CD8-positive, alpha-beta T cell (primary cell): ENCODE measurements at regions of chr11 and their contacts with region 1.

Region 1: GRCh38 chr11:2400069-2400760 is at the start of gene TSSC4:
- DNase-seq: peak; percentile 99 to 100 (median 99)
- ATAC-seq: peak; percentile 87
- H3K4me3 ChIP-seq: peak within 1 kb of the TSS; percentile 94 to 96
- H3K4me3 Mint-ChIP-seq: peak within 1 kb of the TSS; percentile 92
- H3K27ac ChIP-seq: peak within 1 kb of the TSS; percentile 96 to 99
- H3K27ac Mint-ChIP-seq: peak within 1 kb of the TSS; percentile 94
- H3K4me1 ChIP-seq: peaks cover 24% of the 10 kb centered on the region
- H3K4me1 Mint-ChIP-seq: peaks cover 19% of the 10 kb centered on the region
- H3K27me3 ChIP-seq: no peaks in the 10 kb centered on the region
- H3K27me3 Mint-ChIP-seq: no peaks in the 10 kb centered on the region
- CTCF ChIP-seq: peak; percentile 85
- total RNA-seq, gene TSSC4: 48.8 to 49.5 TPM

Region 2: DNA sequence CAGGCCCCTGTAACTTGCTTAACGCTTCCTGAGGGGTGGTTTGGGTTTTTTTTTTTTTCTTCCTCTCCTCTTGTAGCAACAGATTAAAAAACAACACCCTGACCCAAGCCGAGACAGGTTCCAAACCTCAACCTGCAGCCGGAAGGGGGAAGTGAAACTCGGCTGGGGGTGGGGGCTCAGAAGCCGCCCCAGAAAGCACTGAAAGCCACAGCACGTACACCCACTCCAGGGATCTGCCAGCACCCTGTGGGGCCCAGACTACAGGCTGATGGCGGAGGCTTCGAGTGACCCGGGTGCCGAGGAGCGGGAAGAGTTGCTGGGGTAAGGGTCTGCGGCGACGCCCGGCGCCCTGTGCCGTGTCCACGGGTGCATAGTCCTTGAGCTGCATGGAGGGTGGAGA is 547.3 kb before region 1 on chr11 and contains the start of gene LSP1:
- CTCF ChIA-PET with region 1: no interaction called
- POLR2A ChIA-PET with region 1: no interaction called
- intact Hi-C with region 1: loop called in 1 of 2 experiments (anchors 10 kb)
- DNase-seq: peak; percentile 64 to 96 (median 86)
- ATAC-seq: peak; percentile 65
- H3K4me3 ChIP-seq: peak within 1 kb of the TSS; percentile 81 to 100
- H3K4me3 Mint-ChIP-seq: peak within 1 kb of the TSS; percentile 94
- H3K27ac ChIP-seq: peak within 1 kb of the TSS; percentile 90 to 91
- H3K27ac Mint-ChIP-seq: peak within 1 kb of the TSS; percentile 92
- H3K4me1 ChIP-seq: peaks cover 81% of the 10 kb centered on the region
- H3K4me1 Mint-ChIP-seq: peaks cover 67% of the 10 kb centered on the region
- H3K27me3 ChIP-seq: no peaks in the 10 kb centered on the region
- H3K27me3 Mint-ChIP-seq: no peaks in the 10 kb centered on the region
- CTCF ChIP-seq: no peak
- total RNA-seq, gene LSP1: 190 to 191 TPM

Region 3: DNA sequence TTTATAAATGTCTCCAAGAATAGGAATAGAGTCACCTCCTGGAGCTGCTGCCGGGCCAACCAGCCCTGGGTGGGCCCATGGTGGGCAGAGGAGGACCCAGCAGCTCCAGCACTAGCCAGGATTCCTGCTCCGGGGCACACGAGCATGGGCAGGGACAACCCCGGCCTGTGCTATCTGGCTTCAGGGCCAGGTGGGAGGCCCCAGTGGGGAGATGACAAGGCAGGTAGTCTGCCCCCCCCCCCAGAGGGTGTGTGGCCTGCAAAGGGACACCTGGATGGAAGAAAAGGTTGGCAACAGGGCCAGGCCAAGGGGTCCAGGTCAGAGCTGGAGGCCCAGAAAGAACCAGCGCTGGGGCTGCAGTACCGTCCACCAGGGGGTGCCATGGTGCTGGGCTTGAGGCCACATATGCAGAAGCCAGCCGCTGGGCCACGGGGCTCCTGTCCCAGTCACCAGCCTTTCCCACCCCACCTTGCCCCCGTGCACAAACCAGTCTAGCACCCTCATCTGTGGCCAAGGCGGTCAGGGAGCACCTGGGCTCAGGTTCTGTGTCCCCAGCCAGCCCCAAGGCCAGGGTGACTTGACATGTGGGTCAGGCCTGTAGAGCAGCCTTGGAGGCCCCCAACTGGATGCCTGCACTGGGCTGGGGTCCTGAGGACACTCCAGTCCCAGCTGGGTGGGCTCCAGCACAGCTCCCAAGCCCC is 94.9 kb before region 1 on chr11:
- CTCF ChIA-PET with region 1: interaction called, 20 read pairs
- POLR2A ChIA-PET with region 1: interaction called, 23 read pairs
- intact Hi-C with region 1: loop called (anchors 1 kb)
- DNase-seq: peak; percentile 67 to 93 (median 86)
- ATAC-seq: peak; percentile 52
- H3K4me3 ChIP-seq: peak overlapping the region; percentile 82 to 83
- H3K4me3 Mint-ChIP-seq: peak overlapping the region; percentile 91
- H3K27ac ChIP-seq: peak overlapping the region; percentile 48 to 61
- H3K27ac Mint-ChIP-seq: peak overlapping the region; percentile 86
- H3K4me1 ChIP-seq: peaks cover 56% of the 10 kb centered on the region
- H3K4me1 Mint-ChIP-seq: peaks cover 51% of the 10 kb centered on the region
- H3K27me3 ChIP-seq: no peaks in the 10 kb centered on the region
- H3K27me3 Mint-ChIP-seq: no peaks in the 10 kb centered on the region
- CTCF ChIP-seq: peak; percentile 78

Region 4: DNA sequence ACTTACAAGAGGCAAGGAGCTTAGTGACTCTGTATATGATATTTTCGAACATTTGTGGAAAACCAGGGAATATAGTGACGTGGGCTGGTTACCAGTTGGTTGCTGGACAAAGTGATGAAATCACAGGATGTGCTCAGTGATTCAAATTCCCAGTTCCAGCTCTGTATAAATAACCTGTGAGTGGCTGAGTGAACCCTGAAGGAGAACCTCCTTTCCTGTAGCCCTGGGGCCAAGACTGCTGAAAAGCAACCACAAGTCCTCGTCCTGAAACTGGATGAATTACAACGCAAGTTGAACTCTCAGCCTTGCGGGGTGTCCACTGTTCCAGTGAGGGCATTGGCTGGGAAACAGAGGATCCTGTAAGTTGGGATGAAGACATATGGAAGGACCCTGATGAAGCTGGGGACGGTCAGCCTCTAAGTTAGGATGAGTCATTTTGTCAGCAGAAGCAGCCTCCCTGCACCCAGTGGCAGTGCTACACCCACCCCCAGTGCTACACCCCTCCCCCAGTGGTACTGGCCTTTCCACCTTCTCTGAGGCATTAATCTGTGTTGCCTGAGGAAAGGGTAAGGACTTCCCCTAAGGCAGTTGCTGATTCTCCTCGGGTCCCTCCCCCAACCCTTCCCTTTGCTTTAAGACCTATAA is 45.1 kb before region 1 on chr11:
- CTCF ChIA-PET with region 1: no interaction called
- POLR2A ChIA-PET with region 1: no interaction called
- intact Hi-C with region 1: no loop called
- DNase-seq: no peak
- ATAC-seq: no peak
- H3K4me3 ChIP-seq: no peak overlapping the region
- H3K4me3 Mint-ChIP-seq: no peak overlapping the region
- H3K27ac ChIP-seq: no peak overlapping the region
- H3K27ac Mint-ChIP-seq: no peak overlapping the region
- H3K4me1 ChIP-seq: no peaks in the 10 kb centered on the region
- H3K4me1 Mint-ChIP-seq: no peaks in the 10 kb centered on the region
- H3K27me3 ChIP-seq: no peaks in the 10 kb centered on the region
- H3K27me3 Mint-ChIP-seq: peaks cover 2% of the 10 kb centered on the region
- CTCF ChIP-seq: no peak

Region 5: GRCh38 chr11:2387266-2387987 is 12.8 kb before region 1 on chr11:
- CTCF ChIA-PET with region 1: interaction called, 5 read pairs
- POLR2A ChIA-PET with region 1: interaction called, 24 read pairs
- intact Hi-C with region 1: no loop called
- DNase-seq: peak in 6 of 9 experiments; percentile 32 to 85 (median 59)
- ATAC-seq: peak; percentile 56
- H3K4me3 ChIP-seq: peak overlapping the region in 1 of 2 experiments; percentile 31
- H3K4me3 Mint-ChIP-seq: peak overlapping the region; percentile 18
- H3K27ac ChIP-seq: peak overlapping the region in 1 of 2 experiments; percentile 72
- H3K27ac Mint-ChIP-seq: peak overlapping the region; percentile 55
- H3K4me1 ChIP-seq: peaks cover 61% of the 10 kb centered on the region
- H3K4me1 Mint-ChIP-seq: peaks cover 60% of the 10 kb centered on the region
- H3K27me3 ChIP-seq: no peaks in the 10 kb centered on the region
- H3K27me3 Mint-ChIP-seq: no peaks in the 10 kb centered on the region
- CTCF ChIP-seq: no peak

Region 6: DNA sequence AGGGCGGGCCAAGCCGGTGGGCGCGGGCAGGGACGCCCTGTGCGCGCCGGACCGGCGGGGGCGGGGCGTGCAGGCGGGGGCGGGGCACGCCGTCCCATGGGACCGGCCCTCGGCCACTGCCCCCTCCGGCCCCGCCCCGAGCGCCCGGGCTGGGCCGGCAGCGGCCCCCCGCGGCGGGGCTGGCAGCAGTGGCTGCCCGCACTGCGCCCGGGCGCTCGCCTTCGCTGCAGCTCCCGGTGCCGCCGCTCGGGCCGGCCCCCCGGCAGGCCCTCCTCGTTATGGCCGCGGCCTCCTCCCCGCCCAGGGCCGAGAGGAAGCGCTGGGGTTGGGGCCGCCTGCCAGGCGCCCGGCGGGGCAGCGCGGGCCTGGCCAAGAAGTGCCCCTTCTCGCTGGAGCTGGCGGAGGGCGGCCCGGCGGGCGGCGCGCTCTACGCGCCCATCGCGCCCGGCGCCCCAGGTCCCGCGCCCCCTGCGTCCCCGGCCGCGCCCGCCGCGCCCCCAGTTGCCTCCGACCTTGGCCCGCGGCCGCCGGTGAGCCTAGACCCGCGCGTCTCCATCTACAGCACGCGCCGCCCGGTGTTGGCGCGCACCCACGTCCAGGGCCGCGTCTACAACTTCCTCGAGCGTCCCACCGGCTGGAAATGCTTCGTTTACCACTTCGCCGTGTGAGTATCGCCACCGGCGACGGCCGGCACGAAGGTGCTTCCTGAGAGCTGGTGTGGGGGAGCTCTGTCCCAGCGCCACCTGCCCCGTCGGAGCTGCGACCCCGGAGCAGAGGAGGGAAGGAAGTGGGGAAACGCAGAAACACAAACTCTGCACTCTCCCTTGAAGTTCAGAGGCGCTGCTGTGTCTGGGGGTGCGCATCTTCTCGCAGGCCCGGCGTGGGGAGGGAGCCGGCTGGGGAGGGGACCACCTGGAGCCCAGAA is 44.9 kb after region 1 on chr11 and contains the start of gene KCNQ1:
- CTCF ChIA-PET with region 1: interaction called, 3 read pairs
- POLR2A ChIA-PET with region 1: no interaction called
- intact Hi-C with region 1: loop called (anchors 1 kb)
- DNase-seq: peak in 4 of 9 experiments; percentile 29 to 68 (median 65)
- ATAC-seq: peak; percentile 41
- H3K4me3 ChIP-seq: peak within 1 kb of the TSS; percentile 53 to 56
- H3K4me3 Mint-ChIP-seq: peak within 1 kb of the TSS; percentile 91
- H3K27ac ChIP-seq: peak within 1 kb of the TSS in 1 of 2 experiments; percentile 35
- H3K27ac Mint-ChIP-seq: peak within 1 kb of the TSS; percentile 88
- H3K4me1 ChIP-seq: peaks cover 51% of the 10 kb centered on the region
- H3K4me1 Mint-ChIP-seq: peaks cover 41% of the 10 kb centered on the region
- H3K27me3 ChIP-seq: peaks cover 0 to 25% of the 10 kb centered on the region in 2 experiments
- H3K27me3 Mint-ChIP-seq: no peaks in the 10 kb centered on the region
- CTCF ChIP-seq: no peak
- total RNA-seq, gene KCNQ1: 24.9 to 25.7 TPM

Region 7: DNA sequence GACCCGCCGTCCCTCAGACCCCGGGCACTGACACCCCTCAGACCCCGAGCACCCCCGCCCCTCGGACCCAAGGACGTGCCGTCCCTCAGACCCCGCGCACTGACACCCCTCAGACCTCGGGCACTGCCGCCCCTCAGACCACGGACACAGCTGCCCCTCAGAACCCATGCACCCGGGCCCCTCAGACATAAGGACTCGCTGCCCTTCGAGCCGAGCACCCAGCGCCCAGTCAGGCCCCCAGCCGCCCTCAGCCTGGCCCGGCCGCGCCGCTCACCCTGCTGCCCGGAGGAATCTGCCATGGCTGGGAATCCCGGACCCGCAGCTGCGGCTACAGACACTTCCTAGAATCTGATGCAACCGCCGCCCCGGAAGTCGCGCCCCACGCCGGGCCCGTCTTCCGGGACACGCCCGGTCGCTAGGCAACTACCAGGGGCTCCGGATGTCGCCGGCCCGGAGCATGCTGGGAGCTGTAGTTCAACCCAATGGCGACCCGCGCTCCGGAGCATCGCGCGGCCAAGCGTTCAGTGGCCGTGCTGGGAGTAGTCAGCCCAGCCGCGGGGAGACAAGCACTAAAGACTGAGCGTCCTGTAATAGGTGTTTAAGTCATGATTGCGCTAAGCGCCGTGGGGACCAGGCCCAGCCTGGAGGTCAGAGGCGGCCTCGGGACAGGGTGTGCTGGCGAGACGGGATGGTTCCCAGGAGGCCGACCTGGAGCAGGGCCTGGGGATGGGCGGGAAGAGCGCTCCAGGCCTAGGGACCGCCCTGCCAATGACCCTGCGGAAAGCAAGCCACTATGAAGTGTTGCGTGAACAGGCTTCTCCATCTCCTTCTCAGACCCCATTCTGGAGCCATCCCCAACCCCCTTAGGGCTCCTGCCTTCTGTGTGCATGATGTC is 657.1 kb after region 1 on chr11 and contains the start of gene CARS1:
- CTCF ChIA-PET with region 1: no interaction called
- POLR2A ChIA-PET with region 1: no interaction called
- intact Hi-C with region 1: loop called (anchors 1 to 2 kb)
- DNase-seq: peak; percentile 79 to 96 (median 92)
- ATAC-seq: peak; percentile 97
- H3K4me3 ChIP-seq: peak within 1 kb of the TSS; percentile 88 to 93
- H3K4me3 Mint-ChIP-seq: peak within 1 kb of the TSS; percentile 87
- H3K27ac ChIP-seq: peak within 1 kb of the TSS; percentile 73 to 76
- H3K27ac Mint-ChIP-seq: peak within 1 kb of the TSS; percentile 79
- H3K4me1 ChIP-seq: peaks cover 17% of the 10 kb centered on the region
- H3K4me1 Mint-ChIP-seq: peaks cover 38% of the 10 kb centered on the region
- H3K27me3 ChIP-seq: no peaks in the 10 kb centered on the region
- H3K27me3 Mint-ChIP-seq: no peaks in the 10 kb centered on the region
- CTCF ChIP-seq: no peak
- total RNA-seq, gene CARS1: 34.2 to 34.7 TPM